ENCODE measurements at regions of chr11 and their contacts with region 1.

Region 1: DNA sequence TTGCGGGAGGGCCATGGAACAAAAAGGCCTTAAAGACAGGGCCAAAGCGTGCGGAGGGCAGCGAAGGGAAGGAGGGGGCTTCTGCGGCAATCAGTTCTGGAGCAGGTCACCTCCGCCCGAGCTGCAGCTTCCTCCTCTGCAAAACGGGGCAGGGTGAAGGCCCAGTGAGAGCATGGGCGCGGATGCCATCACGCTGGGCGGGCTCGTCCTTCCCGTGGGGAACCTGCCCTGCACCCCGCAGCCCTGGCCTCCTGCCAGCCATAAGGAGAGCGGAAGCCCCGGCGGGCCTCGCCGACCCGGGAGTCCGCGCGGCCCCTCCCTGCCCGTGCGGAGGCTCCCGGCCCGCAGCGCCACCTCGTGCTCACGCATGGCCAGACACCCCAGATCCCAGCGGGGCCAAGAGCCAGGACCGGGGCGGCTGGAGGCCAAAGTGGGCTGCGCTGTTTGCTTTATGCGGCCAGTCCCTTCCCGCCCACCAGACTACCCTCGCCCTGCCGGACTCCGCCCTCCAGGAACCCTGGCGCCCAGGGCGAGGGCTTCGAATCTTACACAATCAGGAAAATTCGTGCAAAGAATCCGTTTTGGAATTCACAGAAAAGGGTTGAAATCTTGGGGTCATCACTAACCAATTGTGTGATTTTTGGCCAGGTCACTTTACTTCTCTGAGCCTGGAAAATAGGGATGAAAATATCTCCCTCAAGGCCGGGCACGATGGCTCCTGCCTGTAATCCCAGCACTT is 16.1 kb downstream of the TSKU start:
- DNase-seq: peak; percentile 81
- ATAC-seq: peak; percentile 88
- H3K4me3 ChIP-seq: no peak overlapping the region; a peak in 1 of 6 replicates
- H3K27ac ChIP-seq: no peak overlapping the region
- H3K4me1 ChIP-seq: peaks cover 63% of the 10 kb centered on the region
- H3K27me3 ChIP-seq: no peaks in the 10 kb centered on the region; a peak in 2 of 5 replicates
- CTCF ChIP-seq: peak; percentile 96
- EP300 ChIP-seq: peak in 1 of 2 experiments; percentile 44; a peak in 1 of 4 replicates
- POLR2A ChIP-seq: 0 out of 4 replicates have a peak, but pooled peaks of 1 of the 2 experiments have one; percentile 25
- RAD21 ChIP-seq: peak; percentile 99

Region 2: GRCh38 chr11:76744186-76745043 is 54.8 kb before region 1 on chr11:
- CTCF ChIA-PET with region 1: no interaction called
- POLR2A ChIA-PET with region 1: no interaction called
- in situ Hi-C with region 1: loop called (anchors 10 kb)
- intact Hi-C with region 1: no loop called
- DNase-seq: no peak
- ATAC-seq: peak; percentile 72
- H3K4me3 ChIP-seq: no peak overlapping the region; a peak in 1 of 6 replicates
- H3K27ac ChIP-seq: no peak overlapping the region
- H3K4me1 ChIP-seq: peaks cover 29% of the 10 kb centered on the region
- H3K27me3 ChIP-seq: peaks cover 3% of the 10 kb centered on the region in 2 experiments; a peak in 2 of 5 replicates
- CTCF ChIP-seq: peak; percentile 52
- EP300 ChIP-seq: no peak
- POLR2A ChIP-seq: no peak
- RAD21 ChIP-seq: no peak